Caco-2 (cell line): ENCODE measurements at regions of chr4 and their contacts with region 1.

Region 1: GRCh38 chr4:26362745-26363439 is 42.1 kb downstream of the RBPJ start:
- DNase-seq: no peak
- H3K4me3 ChIP-seq: no peak overlapping the region
- H3K4me3 Mint-ChIP-seq: no peak overlapping the region
- H3K27ac Mint-ChIP-seq: no peak overlapping the region
- H3K4me1 ChIP-seq: 0 out of 2 replicates have a peak, but pooled peaks cover under 1% of the 10 kb centered on the region
- H3K4me1 Mint-ChIP-seq: peaks cover under 1% of the 10 kb centered on the region
- H3K27me3 ChIP-seq: no peaks in the 10 kb centered on the region
- H3K27me3 Mint-ChIP-seq: no peaks in the 10 kb centered on the region
- CTCF ChIP-seq: no peak

Region 2: DNA sequence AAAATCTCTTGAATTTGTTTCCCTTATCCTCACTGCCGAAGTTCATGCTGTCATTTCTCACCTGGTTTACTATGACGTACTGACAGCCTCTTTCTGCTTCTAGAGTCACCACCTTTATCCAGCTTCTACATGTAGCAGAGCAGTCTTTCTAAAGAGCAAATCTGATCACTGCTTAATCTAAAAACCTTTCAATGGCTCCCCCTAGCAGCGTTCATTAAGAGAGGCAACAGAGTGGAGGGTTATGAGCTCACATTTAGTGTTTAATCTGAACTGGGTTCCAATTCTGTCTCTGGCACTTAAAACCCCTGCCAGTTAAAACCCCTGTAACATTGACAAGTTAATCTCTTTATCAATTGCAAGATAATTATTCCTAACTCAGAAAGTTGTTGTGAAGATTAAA is 37.7 kb before region 1 on chr4:
- CTCF ChIA-PET with region 1: interaction called, 12 read pairs
- POLR2A ChIA-PET with region 1: no interaction called
- intact Hi-C with region 1: no loop called
- DNase-seq: peak in 1 of 2 experiments; percentile 20
- H3K4me3 ChIP-seq: no peak overlapping the region
- H3K4me3 Mint-ChIP-seq: no peak overlapping the region
- H3K27ac Mint-ChIP-seq: no peak overlapping the region
- H3K4me1 ChIP-seq: peaks cover 12% of the 10 kb centered on the region; the same call in 1 of the 2 replicates
- H3K4me1 Mint-ChIP-seq: peaks cover 12% of the 10 kb centered on the region
- H3K27me3 ChIP-seq: no peaks in the 10 kb centered on the region
- H3K27me3 Mint-ChIP-seq: no peaks in the 10 kb centered on the region
- CTCF ChIP-seq: peak in 1 of 2 experiments; percentile 10